ENCODE measurements at regions of chr3 and their contacts with region 1.

Region 1: DNA sequence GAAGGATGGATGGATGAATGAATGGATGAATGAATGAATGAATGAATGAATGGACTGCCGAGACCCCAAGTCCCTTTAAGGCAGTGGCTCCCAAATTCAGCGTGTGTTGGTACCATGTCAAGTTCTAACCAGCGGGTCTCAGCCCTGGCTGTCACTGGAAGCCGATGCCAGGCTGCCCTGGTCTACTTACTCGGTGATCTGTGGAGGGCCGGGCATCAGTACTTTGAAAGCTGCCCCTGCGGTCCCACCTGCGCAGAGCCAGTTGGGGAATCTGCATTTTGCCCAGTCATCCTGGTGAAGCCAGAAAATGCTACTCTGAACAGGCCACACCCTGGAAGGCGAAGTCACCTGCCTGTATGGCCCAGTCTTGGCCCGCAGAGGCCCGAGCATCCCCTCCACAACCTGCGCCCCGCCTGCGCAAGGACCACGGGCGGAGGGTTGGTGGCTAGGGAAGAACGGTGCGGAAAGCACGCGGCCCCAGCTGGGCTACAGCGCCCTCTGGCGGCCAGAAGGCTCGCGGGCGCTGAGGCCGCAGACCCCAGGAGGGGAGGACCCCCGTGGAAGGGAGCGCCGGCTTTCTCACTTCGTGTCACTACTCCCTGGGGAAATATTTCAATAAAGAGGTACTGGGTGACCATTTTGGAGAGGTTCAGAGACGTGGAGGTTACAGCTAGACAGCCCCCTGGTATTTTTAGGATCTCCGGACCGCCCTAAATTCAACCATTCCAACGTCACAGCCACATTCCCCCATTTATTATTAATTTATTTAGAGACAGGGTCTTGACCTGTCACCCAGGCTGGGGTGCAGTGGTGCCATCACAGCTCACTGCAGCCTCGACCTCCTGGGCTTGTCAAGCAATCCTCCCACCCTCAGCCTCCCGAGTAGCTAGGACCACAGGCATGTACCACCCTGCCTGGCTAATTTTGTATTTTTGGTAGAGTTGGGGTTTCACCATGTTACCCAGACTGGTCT is 34.9 kb downstream of the PRKCD start:
- DNase-seq: peak; percentile 59
- H3K4me3 ChIP-seq: no peak overlapping the region
- H3K27ac ChIP-seq: no peak overlapping the region
- H3K4me1 ChIP-seq: peaks cover 0 to 19% (median 7%) of the 10 kb centered on the region in 4 donors
- H3K27me3 ChIP-seq: no peaks in the 10 kb centered on the region
- CTCF ChIP-seq: peak; percentile 97 to 99 (median 98)
- EP300 ChIP-seq: no peak
- POLR2A ChIP-seq: no peak

Region 2: DNA sequence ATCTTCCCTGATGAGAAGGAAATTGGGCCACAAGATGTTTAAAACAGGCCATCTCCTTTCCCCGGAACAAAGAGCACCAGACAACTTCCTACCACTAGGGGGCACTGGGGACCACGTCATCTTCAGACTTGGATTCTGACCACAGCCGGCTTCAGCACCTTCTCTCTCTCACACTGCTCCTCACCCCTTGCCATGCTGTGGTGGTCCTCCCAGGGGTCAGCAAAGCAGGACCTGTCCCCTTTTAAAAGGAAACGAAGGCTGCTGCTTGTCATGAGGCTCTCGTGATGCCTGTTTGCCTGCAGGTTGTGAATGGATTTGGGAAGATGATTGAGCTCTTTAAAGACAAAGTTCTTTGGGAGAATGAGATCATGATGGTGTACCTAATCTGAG is 81.9 kb before region 1 on chr3:
- in situ Hi-C with region 1: loop called (anchors 5 to 10 kb)
- intact Hi-C with region 1: loop called (anchors 2 kb)
- DNase-seq: peak; percentile 86
- H3K4me3 ChIP-seq: no peak overlapping the region
- H3K27ac ChIP-seq: peak overlapping the region in 3 of 4 donors; percentile 57 to 76 (median 58)
- H3K4me1 ChIP-seq: peaks cover 0 to 17% (median 5%) of the 10 kb centered on the region in 4 donors
- H3K27me3 ChIP-seq: no peaks in the 10 kb centered on the region
- CTCF ChIP-seq: peak; percentile 89 to 95 (median 92)
- EP300 ChIP-seq: no peak
- POLR2A ChIP-seq: no peak

Region 3: GRCh38 chr3:53130179-53131061 is 65.5 kb before region 1 on chr3 and contains the start of gene RFT1:
- in situ Hi-C with region 1: no loop called
- intact Hi-C with region 1: loop called (anchors 5 kb)
- DNase-seq: peak; percentile 99
- H3K4me3 ChIP-seq: peak within 1 kb of the TSS; percentile 63 to 97 (median 85)
- H3K27ac ChIP-seq: peak within 1 kb of the TSS; percentile 81 to 95 (median 94)
- H3K4me1 ChIP-seq: peaks cover 14 to 30% (median 21%) of the 10 kb centered on the region in 4 donors
- H3K27me3 ChIP-seq: no peaks in the 10 kb centered on the region
- CTCF ChIP-seq: peak in 4 of 5 experiments; percentile 15 to 55 (median 30)
- EP300 ChIP-seq: no peak
- POLR2A ChIP-seq: peak; percentile 81
- total RNA-seq, gene RFT1: 2.2 to 10.3 (median 8.5) TPM

Region 4: DNA sequence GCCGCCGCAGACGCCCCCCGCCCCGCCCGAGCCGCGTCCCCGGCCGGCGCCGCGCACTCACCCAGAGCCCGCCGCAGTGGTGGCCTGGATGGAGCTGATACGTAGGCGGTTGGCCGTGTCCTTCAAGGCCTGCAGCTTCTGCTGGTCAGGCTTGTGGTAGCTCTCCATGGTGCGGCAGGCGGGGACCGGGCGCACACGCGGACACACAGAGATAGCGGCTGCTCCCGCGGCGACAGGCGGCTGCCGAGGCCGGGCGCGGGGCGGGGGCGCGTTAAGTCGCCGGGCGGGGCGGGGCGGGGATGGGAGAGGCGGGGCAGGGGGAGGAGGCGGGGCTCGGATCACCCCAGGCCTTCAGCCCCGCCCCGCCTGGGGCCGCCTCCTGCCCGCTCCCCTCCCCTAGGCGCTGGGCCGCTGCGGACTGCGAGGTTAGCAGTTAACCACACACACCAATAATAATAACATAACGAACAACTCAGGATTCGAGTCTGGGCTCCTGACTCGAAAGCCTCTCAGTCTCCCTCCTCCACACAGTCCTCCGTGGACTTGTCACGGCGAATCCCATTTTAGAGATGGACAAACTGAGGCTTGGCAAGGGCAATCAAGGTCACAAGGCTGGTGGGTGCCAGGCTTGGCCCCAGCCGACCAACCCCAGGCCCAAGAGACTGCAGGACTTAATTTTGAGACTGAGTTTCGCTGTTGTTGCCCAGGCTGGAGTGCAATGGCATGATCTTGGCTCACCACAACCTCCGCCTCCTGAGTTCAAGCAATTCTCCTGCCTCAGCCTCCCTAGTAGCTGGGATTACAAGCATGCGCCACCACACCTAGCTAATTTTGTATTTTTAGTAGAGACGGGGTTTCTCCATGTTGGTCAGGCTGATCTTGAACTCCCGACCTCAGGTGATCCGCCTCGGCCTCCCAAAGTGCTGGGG is 60.2 kb after region 1 on chr3 and contains the start of gene TKT:
- in situ Hi-C with region 1: no loop called
- intact Hi-C with region 1: no loop called
- DNase-seq: peak; percentile 90
- H3K4me3 ChIP-seq: peak within 1 kb of the TSS; percentile 80 to 97 (median 84)
- H3K27ac ChIP-seq: peak within 1 kb of the TSS; percentile 83 to 99 (median 95)
- H3K4me1 ChIP-seq: peaks cover 15 to 41% (median 29%) of the 10 kb centered on the region in 4 donors
- H3K27me3 ChIP-seq: no peaks in the 10 kb centered on the region
- CTCF ChIP-seq: no peak
- EP300 ChIP-seq: no peak
- POLR2A ChIP-seq: peak; percentile 63
- total RNA-seq, gene TKT: 97.3 to 338 (median 167) TPM

Region 5: DNA sequence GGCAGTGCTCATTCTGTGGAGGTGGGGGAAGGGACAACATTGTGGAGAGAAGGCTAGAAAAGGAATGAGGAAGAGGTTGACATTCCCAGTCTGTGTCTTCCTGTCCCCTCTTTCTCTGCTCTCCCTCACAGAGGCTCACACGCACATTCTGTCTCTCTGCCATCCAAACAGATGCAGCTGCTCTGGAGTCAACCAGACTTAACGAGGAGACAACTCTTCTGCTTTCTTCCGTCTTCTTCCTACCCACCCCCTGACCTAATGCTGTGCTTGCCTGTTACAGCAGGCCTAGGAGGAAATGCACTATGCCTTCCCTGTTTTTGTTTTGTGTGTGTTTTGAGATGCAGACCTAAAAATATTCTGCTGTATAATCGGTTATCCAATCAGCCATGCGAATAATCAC is 420.4 kb after region 1 on chr3:
- in situ Hi-C with region 1: no loop called
- intact Hi-C with region 1: no loop called
- DNase-seq: no peak
- H3K4me3 ChIP-seq: no peak overlapping the region
- H3K27ac ChIP-seq: no peak overlapping the region
- H3K4me1 ChIP-seq: peaks cover 0 to 12% (median 4%) of the 10 kb centered on the region in 4 donors
- H3K27me3 ChIP-seq: no peaks in the 10 kb centered on the region
- CTCF ChIP-seq: no peak
- EP300 ChIP-seq: no peak
- POLR2A ChIP-seq: no peak

Measured in transverse colon (tissue), 4 donors.